ENCODE measurements at regions of chr13 and their contacts with region 1.

Region 1: GRCh38 chr13:40974460-40975407 is 44.4 kb downstream of the ELF1 start:
- DNase-seq: no peak
- ATAC-seq: peak; percentile 78
- H3K4me3 ChIP-seq: peak overlapping the region; percentile 34
- H3K27ac ChIP-seq: peak overlapping the region; percentile 56
- H3K4me1 ChIP-seq: peaks cover 38% of the 10 kb centered on the region
- H3K27me3 ChIP-seq: no peaks in the 10 kb centered on the region
- CTCF ChIP-seq: peak; percentile 69 to 80 (median 70)
- EP300 ChIP-seq: no peak
- POLR2A ChIP-seq: 0 out of 2 replicates have a peak, but pooled peaks have one; percentile 16
- RAD21 ChIP-seq: peak; percentile 77

Region 2: DNA sequence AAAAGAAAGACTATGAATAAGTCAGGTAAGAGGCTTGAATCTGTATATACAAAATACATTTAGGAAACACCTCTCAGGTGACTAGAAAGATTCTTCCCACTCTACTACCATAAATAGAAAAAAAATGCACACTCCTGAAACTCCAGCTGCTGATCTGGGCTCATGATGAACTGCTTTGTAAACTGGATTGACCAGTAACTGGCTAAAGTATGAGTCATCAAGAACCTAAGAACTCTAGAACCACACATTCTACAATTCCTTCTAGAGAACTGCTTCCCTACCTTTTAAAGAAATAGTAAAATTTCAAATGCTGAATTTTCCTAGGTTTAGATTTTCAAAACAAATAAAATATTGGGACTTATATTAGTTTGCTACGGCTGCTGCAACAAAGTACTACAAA is 10.8 kb before region 1 on chr13:
- CTCF ChIA-PET with region 1: interaction called, 20 read pairs
- POLR2A ChIA-PET with region 1: interaction called, 6 read pairs
- RAD21 ChIA-PET with region 1: interaction called, 13 read pairs
- SMC1A ChIA-PET with region 1: interaction called, 24 read pairs
- in situ Hi-C with region 1: no loop called
- intact Hi-C with region 1: no loop called
- DNase-seq: no peak
- ATAC-seq: peak; percentile 39
- H3K4me3 ChIP-seq: no peak overlapping the region
- H3K27ac ChIP-seq: no peak overlapping the region; the same call in 1 of the 2 replicates
- H3K4me1 ChIP-seq: peaks cover 46% of the 10 kb centered on the region
- H3K27me3 ChIP-seq: no peaks in the 10 kb centered on the region
- CTCF ChIP-seq: no peak
- EP300 ChIP-seq: no peak
- POLR2A ChIP-seq: no peak
- RAD21 ChIP-seq: no peak

Region 3: GRCh38 chr13:41004875-41005693 is 30.4 kb after region 1 on chr13:
- CTCF ChIA-PET with region 1: interaction called, 52 read pairs
- POLR2A ChIA-PET with region 1: interaction called, 14 read pairs
- RAD21 ChIA-PET with region 1: interaction called, 22 read pairs
- SMC1A ChIA-PET with region 1: interaction called, 35 read pairs
- in situ Hi-C with region 1: no loop called
- intact Hi-C with region 1: loop called (anchors 2 kb)
- DNase-seq: peak; percentile 79
- ATAC-seq: peak; percentile 72
- H3K4me3 ChIP-seq: peak overlapping the region; percentile 18; the same call in 1 of the 2 replicates
- H3K27ac ChIP-seq: peak overlapping the region; percentile 78
- H3K4me1 ChIP-seq: peaks cover 53% of the 10 kb centered on the region
- H3K27me3 ChIP-seq: no peaks in the 10 kb centered on the region
- CTCF ChIP-seq: no peak
- EP300 ChIP-seq: peak; percentile 80 to 83
- POLR2A ChIP-seq: no peak
- RAD21 ChIP-seq: 0 out of 2 replicates have a peak, but pooled peaks have one; percentile 7

Region 4: DNA sequence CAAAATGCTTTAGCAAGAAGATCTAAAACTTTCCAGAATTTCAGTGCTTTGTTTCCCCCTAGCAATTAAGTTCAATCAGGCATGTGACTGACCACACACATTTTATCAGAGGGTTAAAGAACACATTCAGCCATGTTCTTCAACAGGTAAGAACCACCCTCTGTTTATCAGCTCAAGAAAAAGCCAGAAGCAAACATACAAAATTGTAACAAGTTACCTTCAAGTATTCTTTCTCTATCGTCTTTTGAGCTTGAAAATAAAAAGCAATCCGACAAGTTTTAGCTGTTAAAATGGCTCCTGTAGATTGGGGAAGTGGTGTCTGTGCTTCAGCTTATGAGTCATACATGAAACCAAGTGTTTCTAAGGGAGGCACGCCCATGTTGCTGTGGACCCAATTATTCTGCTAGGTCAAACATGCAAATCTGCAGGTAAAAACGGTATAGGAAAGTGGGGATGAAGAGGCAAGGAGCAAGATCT is 44.3 kb after region 1 on chr13 and contains the start of gene ELF1:
- CTCF ChIA-PET with region 1: interaction called, 39 read pairs
- POLR2A ChIA-PET with region 1: interaction called, 45 read pairs
- RAD21 ChIA-PET with region 1: interaction called, 62 read pairs
- SMC1A ChIA-PET with region 1: interaction called, 59 read pairs
- in situ Hi-C with region 1: no loop called
- intact Hi-C with region 1: loop called (anchors 2 kb)
- DNase-seq: peak; percentile 88
- ATAC-seq: peak; percentile 79
- H3K4me3 ChIP-seq: peak within 1 kb of the TSS; percentile 90
- H3K27ac ChIP-seq: peak within 1 kb of the TSS; percentile 100
- H3K4me1 ChIP-seq: peaks cover 7% of the 10 kb centered on the region
- H3K27me3 ChIP-seq: no peaks in the 10 kb centered on the region
- CTCF ChIP-seq: no peak
- EP300 ChIP-seq: peak; percentile 78 to 95
- POLR2A ChIP-seq: peak; percentile 47
- RAD21 ChIP-seq: 0 out of 2 replicates have a peak, but pooled peaks have one; percentile 13
- polyA plus RNA-seq, gene ELF1: 43.3 to 43.5 TPM

Region 5: GRCh38 chr13:41061075-41061913 is 86.6 kb after region 1 on chr13 and contains the start of gene WBP4:
- CTCF ChIA-PET with region 1: interaction called, 28 read pairs
- POLR2A ChIA-PET with region 1: interaction called, 8 read pairs
- RAD21 ChIA-PET with region 1: interaction called, 172 read pairs
- SMC1A ChIA-PET with region 1: interaction called, 13 read pairs
- in situ Hi-C with region 1: loop called (anchors 5 kb)
- intact Hi-C with region 1: loop called (anchors 5 kb)
- DNase-seq: peak; percentile 82
- ATAC-seq: peak; percentile 80
- H3K4me3 ChIP-seq: peak within 1 kb of the TSS; percentile 94
- H3K27ac ChIP-seq: peak within 1 kb of the TSS; percentile 96
- H3K4me1 ChIP-seq: peaks cover 3% of the 10 kb centered on the region; the same call in 1 of the 2 replicates
- H3K27me3 ChIP-seq: no peaks in the 10 kb centered on the region
- CTCF ChIP-seq: peak in 1 of 3 experiments; percentile 7; a peak in 2 of 6 replicates
- EP300 ChIP-seq: peak; percentile 34 to 38; a peak in 2 of 4 replicates
- POLR2A ChIP-seq: peak; percentile 89
- RAD21 ChIP-seq: no peak
- polyA plus RNA-seq, gene WBP4: 9.7 to 12.5 TPM

Region 6: DNA sequence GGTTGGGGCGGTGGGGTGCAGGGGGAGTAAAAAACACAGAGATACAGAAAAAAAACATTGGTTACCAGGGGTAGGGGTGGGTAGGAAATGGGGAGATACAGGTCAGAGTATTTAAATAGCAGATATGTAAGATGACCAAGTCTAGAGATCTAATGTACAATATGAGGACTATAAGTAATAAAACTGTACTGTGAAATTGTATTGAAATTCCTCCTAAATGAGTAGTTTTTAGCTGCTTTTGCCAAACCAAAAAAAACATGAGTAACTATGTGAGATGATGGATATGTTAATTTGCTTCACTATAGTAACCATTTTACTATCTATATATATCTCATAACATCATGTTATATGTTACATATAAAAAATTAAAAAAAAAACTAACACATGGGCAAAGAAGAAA is 956.6 kb after region 1 on chr13:
- CTCF ChIA-PET with region 1: no interaction called
- POLR2A ChIA-PET with region 1: no interaction called
- RAD21 ChIA-PET with region 1: no interaction called
- SMC1A ChIA-PET with region 1: no interaction called
- in situ Hi-C with region 1: no loop called
- intact Hi-C with region 1: no loop called
- DNase-seq: no peak
- ATAC-seq: no peak
- H3K4me3 ChIP-seq: no peak overlapping the region
- H3K27ac ChIP-seq: no peak overlapping the region
- H3K4me1 ChIP-seq: peaks cover 4% of the 10 kb centered on the region; the same call in 1 of the 2 replicates
- H3K27me3 ChIP-seq: no peaks in the 10 kb centered on the region
- CTCF ChIP-seq: no peak
- EP300 ChIP-seq: no peak
- POLR2A ChIP-seq: no peak
- RAD21 ChIP-seq: no peak